ENCODE measurements at regions of chr9 and their contacts with region 1.

Region 1: GRCh38 chr9:98860871-98861293 is 53.4 kb downstream of the GALNT12 start:
- DNase-seq: peak; percentile 88

Region 2: DNA sequence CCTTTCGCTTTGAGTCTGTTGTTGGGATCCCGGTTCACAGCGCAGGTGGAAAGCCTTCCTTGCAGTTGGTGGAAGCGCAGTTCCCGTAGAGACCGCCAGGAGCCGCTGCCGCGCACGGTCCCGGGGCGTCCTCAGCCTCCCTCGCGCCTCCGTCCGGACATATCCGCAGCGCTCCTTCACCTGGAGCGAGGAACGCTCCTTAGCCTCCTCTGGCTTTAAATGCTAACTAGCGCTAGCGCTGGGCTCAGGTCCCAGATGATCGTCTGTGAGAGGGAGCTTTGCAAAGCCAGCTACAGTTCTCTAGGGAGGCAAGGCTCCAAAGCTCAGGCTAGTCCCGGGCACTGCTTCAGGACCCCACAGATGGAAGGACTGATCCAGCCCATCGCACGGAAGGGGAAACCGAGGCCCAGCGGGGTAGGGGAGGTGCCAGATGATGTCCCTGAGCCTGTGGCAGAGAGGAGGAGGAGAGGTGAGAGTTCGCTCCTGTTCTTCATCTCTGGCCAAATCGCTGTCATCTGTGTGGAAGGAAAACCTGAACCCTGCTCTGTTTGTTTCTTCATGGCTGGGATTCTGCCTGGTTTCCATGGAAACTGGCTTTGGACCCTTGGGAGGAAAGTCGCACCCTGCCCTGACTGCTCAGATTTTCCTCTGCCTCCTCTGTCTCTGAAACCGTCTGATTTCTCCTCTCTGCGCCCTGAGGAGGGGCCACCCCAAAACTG is 114.3 kb after region 1 on chr9:
- intact Hi-C with region 1: loop called in 1 of 2 experiments (anchors 5 kb)
- DNase-seq: peak; percentile 95

Region 3: DNA sequence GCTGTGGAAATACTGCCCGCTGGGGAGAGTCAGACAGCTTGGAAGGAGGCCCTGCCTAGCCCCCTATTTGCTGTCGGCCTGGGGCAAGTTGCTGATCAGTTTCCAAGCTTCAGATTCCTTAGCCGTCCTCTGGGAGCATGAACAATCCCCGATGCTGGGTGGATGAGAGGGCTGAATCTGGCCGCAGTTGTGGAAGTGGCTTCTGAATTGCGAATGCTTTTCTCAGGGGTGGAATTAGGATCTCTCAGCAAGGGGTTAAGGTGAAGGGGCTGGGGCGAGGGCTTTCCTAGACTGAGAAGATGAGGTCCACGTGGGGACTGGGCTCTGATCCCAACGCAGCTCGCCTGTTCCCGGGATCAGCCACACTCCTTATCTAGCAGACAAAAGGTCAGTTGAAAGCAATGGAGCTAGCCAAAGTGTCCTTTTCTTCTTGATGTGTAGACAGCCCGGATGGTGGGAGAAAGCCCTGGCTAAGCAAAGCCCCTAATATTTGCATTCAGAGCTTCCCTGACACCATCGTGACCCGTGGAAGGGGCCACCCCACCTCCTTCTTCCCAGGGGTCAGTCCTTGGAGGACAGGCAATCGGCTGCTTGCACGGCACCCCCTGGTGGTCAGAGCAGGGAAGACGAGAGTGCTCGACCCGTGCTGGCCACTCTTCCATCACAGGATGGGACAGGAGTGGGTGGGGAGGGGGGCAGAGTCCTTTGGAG is 137.7 kb after region 1 on chr9:
- intact Hi-C with region 1: loop called (anchors 5 to 10 kb)
- DNase-seq: peak; percentile 94

Region 4: DNA sequence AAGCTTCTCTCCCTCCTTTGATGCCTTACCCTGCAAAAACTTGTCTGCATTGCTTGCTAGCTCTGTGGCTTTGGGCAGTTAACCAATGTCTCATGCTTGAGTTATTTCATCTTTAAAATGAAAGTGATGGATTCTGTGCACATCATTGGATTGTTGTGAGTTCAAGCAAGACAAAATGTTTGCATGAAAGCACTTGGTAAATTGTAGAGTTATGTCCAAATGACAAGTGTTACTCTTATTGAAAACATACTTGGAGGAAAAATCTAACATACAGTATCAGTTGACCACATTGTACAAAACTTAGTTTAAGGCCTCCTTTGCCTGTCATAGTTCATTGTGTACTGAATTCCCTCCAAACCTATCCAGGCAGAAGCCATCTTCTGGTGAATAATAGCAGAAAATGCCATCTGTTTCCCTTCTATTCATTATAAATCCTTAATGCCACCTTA is 274.0 kb after region 1 on chr9:
- intact Hi-C with region 1: loop called in 1 of 2 experiments (anchors 5 kb)
- DNase-seq: no peak